ENCODE measurements at regions of chrX and their contacts with region 1.

Region 1: DNA sequence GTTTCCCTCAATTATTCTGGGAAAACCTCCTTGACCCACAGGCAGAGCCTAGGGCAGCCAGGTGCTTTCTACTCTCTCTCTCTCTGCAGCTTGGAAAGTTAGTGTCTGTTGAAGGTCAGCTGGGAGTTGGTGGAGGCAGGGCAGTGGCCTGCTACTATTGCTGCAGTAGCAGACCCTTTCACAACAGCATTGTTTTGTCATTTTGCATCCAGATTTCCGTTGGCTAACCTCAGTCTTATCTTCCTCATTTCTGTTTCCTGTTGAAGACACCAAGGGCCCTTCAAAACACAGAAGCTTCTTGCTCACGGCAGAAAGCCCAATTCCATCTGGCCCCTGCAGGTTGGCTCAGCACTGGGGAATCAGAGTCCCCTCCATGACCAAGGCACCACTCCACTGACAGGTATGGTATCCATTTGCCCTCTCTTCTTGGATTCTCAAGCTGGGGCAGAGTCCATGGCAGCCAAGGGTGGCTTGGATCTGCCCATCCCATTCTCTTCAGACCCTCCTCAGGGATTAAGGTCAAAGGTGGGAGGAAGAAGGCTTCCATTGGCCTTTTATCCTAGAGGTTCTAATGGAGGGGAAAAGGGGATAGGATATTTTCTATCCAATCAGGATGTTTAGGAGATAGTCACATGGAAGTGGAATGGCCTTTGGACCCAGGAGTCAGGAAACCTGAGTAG is 24.6 kb downstream of the VSIG4 start:
- DNase-seq: peak; percentile 68
- ATAC-seq: peak; percentile 40
- H3K4me3 ChIP-seq: peak overlapping the region; percentile 11; the same call in 1 of the 2 replicates
- H3K27ac ChIP-seq: peak overlapping the region; percentile 87
- H3K4me1 ChIP-seq: peaks cover 66% of the 10 kb centered on the region
- H3K27me3 ChIP-seq: no peaks in the 10 kb centered on the region
- CTCF ChIP-seq: no peak
- EP300 ChIP-seq: no peak
- POLR2A ChIP-seq: 0 out of 2 replicates have a peak, but pooled peaks have one; percentile 31
- RAD21 ChIP-seq: no peak

Region 2: GRCh38 chrX:65697915-65698796 is 317.1 kb before region 1 on chrX:
- CTCF ChIA-PET with region 1: no interaction called
- POLR2A ChIA-PET with region 1: no interaction called
- RAD21 ChIA-PET with region 1: interaction called, 5 read pairs
- SMC1A ChIA-PET with region 1: interaction called, 3 read pairs
- in situ Hi-C with region 1: no loop called
- intact Hi-C with region 1: loop called (anchors 5 kb)
- DNase-seq: peak; percentile 83
- ATAC-seq: peak; percentile 72
- H3K4me3 ChIP-seq: peak overlapping the region; percentile 10; the same call in 1 of the 2 replicates
- H3K27ac ChIP-seq: peak overlapping the region; percentile 87
- H3K4me1 ChIP-seq: peaks cover 59% of the 10 kb centered on the region
- H3K27me3 ChIP-seq: no peaks in the 10 kb centered on the region
- CTCF ChIP-seq: no peak
- EP300 ChIP-seq: peak; percentile 12 to 54; a peak in 1 of 4 replicates
- POLR2A ChIP-seq: peak; percentile 55; the same call in 1 of the 2 replicates
- RAD21 ChIP-seq: no peak

Region 3: GRCh38 chrX:65971151-65971550 is 44.1 kb before region 1 on chrX:
- CTCF ChIA-PET with region 1: no interaction called
- POLR2A ChIA-PET with region 1: no interaction called
- RAD21 ChIA-PET with region 1: no interaction called
- SMC1A ChIA-PET with region 1: no interaction called
- in situ Hi-C with region 1: no loop called
- intact Hi-C with region 1: no loop called
- DNase-seq: no peak
- ATAC-seq: no peak
- H3K4me3 ChIP-seq: no peak overlapping the region
- H3K27ac ChIP-seq: no peak overlapping the region
- H3K4me1 ChIP-seq: no peaks in the 10 kb centered on the region
- H3K27me3 ChIP-seq: no peaks in the 10 kb centered on the region
- CTCF ChIP-seq: no peak
- EP300 ChIP-seq: no peak
- POLR2A ChIP-seq: no peak
- RAD21 ChIP-seq: no peak

Region 4: GRCh38 chrX:66030505-66031317 is 15.4 kb after region 1 on chrX:
- CTCF ChIA-PET with region 1: interaction called, 47 read pairs
- POLR2A ChIA-PET with region 1: no interaction called
- RAD21 ChIA-PET with region 1: interaction called, 14 read pairs
- SMC1A ChIA-PET with region 1: interaction called, 16 read pairs
- in situ Hi-C with region 1: no loop called
- intact Hi-C with region 1: no loop called
- DNase-seq: no peak
- ATAC-seq: peak; percentile 97
- H3K4me3 ChIP-seq: no peak overlapping the region
- H3K27ac ChIP-seq: no peak overlapping the region
- H3K4me1 ChIP-seq: no peaks in the 10 kb centered on the region
- H3K27me3 ChIP-seq: no peaks in the 10 kb centered on the region
- CTCF ChIP-seq: peak; percentile 58 to 85 (median 78)
- EP300 ChIP-seq: no peak
- POLR2A ChIP-seq: no peak
- RAD21 ChIP-seq: peak; percentile 74

Region 5: DNA sequence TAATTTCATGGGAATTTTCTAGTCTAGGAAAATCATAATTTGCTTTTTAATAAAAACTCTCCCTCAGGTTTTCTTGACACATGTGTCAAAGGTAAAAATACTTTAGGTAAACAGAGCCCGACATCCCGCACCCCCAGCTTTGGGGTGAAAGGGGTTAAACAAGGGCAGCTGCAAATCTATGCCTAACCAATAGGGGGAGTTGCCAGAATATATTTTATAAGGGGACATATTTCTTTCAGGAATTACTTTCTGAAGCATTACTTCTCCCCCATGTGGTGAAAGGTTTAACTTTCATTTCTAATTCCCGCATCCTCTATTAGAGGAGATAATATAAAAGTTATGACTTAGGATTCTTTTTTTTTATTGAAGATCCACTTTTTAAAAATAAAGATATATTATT is 94.8 kb after region 1 on chrX:
- CTCF ChIA-PET with region 1: interaction called, 24 read pairs
- POLR2A ChIA-PET with region 1: no interaction called
- RAD21 ChIA-PET with region 1: interaction called, 16 read pairs
- SMC1A ChIA-PET with region 1: interaction called, 15 read pairs
- in situ Hi-C with region 1: no loop called
- intact Hi-C with region 1: no loop called
- DNase-seq: no peak
- ATAC-seq: peak; percentile 32
- H3K4me3 ChIP-seq: no peak overlapping the region
- H3K27ac ChIP-seq: no peak overlapping the region
- H3K4me1 ChIP-seq: no peaks in the 10 kb centered on the region
- H3K27me3 ChIP-seq: no peaks in the 10 kb centered on the region
- CTCF ChIP-seq: peak; percentile 33 to 52 (median 34)
- EP300 ChIP-seq: no peak
- POLR2A ChIP-seq: no peak
- RAD21 ChIP-seq: peak; percentile 66

Region 6: GRCh38 chrX:66408507-66408906 is 393.2 kb after region 1 on chrX:
- CTCF ChIA-PET with region 1: interaction called, 12 read pairs
- POLR2A ChIA-PET with region 1: no interaction called
- RAD21 ChIA-PET with region 1: interaction called, 3 read pairs
- SMC1A ChIA-PET with region 1: interaction called, 3 read pairs
- in situ Hi-C with region 1: no loop called
- intact Hi-C with region 1: loop called (anchors 10 kb)
- DNase-seq: peak; percentile 11
- ATAC-seq: peak; percentile 79
- H3K4me3 ChIP-seq: no peak overlapping the region
- H3K27ac ChIP-seq: no peak overlapping the region
- H3K4me1 ChIP-seq: no peaks in the 10 kb centered on the region
- H3K27me3 ChIP-seq: no peaks in the 10 kb centered on the region
- CTCF ChIP-seq: peak; percentile 46 to 56 (median 49); a peak in 4 of 6 replicates
- EP300 ChIP-seq: no peak
- POLR2A ChIP-seq: no peak
- RAD21 ChIP-seq: peak; percentile 57

Measured in GM12878 (cell line).